ENCODE measurements at regions of chr1 and their contacts with region 1.

Region 1: DNA sequence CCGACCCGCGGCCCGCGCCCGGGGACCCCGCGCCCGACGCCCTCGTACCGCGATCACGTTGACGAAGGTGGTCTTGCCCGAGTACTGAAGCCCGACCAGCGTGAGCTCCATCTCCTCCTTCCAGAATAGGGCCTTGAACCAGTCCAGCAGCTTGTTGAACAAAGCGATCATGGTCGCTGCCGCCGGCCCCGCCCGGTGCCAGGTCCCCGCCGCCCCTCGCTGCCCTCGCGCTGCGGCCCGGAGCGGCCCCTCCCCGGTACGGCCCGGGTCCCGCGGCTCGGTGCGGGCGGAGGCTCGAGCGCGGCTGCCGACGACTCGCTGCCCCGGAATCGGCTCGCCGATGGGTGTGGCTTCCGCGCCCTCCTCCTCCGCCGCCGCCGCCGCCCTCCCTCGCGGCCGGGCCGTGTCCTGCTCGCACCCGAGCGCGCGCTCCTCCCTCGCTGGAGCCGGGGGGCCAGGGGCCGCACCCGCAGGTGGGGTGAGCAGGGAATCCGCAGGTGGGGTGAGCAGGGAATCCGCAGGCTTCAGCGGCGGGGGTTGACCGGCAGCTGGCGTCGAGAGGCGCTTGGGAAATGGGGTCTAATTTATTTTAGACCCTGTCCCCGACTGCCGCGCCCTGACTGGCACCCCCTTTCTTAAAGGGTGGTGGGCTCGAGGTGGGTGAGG is at the start of gene ARL8A:
- DNase-seq: peak; percentile 71
- H3K4me3 Mint-ChIP-seq: peak within 1 kb of the TSS; percentile 93
- H3K27ac Mint-ChIP-seq: peak within 1 kb of the TSS; percentile 83
- H3K4me1 Mint-ChIP-seq: peaks cover 38% of the 10 kb centered on the region
- H3K27me3 Mint-ChIP-seq: no peaks in the 10 kb centered on the region
- total RNA-seq, gene ARL8A: 51.6 to 53.8 TPM

Region 2: DNA sequence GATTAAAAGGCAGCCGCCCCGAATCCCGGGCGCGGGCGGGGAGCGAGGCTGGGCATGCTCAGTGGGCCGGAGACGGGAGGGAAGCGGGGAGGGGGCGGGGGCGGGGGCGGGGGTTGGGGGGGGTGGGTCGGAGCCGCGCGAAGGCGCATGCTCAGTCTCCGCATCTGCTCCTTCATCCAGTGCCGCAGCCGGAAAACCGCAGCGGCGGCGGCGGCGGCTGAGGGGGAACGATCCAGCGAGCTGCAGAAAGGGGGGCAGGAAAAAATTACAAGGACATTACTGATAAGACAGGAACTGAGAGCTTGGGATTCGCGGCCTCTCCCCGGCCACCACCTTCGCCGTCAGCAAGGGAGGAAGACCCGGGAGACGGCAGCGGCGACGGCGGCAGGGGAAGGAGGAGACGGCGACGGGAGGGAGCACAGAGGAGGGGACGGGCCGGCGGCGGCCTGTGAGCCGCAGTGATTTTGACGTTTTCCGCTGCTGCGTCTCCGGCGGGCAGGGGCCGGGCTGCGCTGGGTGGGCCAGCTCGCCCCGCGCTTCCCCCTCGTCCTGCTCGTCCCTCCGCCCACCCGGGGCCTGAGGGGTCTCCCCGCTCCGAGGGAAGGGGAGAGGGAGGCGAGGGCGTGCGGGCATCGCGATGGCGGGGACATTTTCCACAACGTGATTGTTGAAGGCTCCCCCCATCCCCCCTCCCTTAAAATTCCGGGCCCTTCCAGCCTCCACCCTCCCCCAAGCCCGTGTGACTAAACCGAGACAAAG is 1405.6 kb before region 1 on chr1 and contains the start of gene CAMSAP2:
- CTCF ChIA-PET with region 1: no interaction called
- POLR2A ChIA-PET with region 1: no interaction called
- DNase-seq: peak; percentile 64
- H3K4me3 Mint-ChIP-seq: peak within 1 kb of the TSS; percentile 93
- H3K27ac Mint-ChIP-seq: peak within 1 kb of the TSS; percentile 83
- H3K4me1 Mint-ChIP-seq: peaks cover 22% of the 10 kb centered on the region
- H3K27me3 Mint-ChIP-seq: peaks cover 33% of the 10 kb centered on the region
- total RNA-seq, gene CAMSAP2: 0.81 to 0.82 TPM

Region 3: GRCh38 chr1:202112839-202113672 is 31.5 kb before region 1 on chr1:
- CTCF ChIA-PET with region 1: no interaction called
- POLR2A ChIA-PET with region 1: no interaction called
- DNase-seq: no peak
- H3K4me3 Mint-ChIP-seq: no peak overlapping the region
- H3K27ac Mint-ChIP-seq: no peak overlapping the region
- H3K4me1 Mint-ChIP-seq: no peaks in the 10 kb centered on the region
- H3K27me3 Mint-ChIP-seq: no peaks in the 10 kb centered on the region

Region 4: GRCh38 chr1:202154766-202155477 is 10.4 kb after region 1 on chr1:
- CTCF ChIA-PET with region 1: interaction called, 35 read pairs
- POLR2A ChIA-PET with region 1: interaction called, 7 read pairs
- DNase-seq: peak; percentile 64
- H3K4me3 Mint-ChIP-seq: no peak overlapping the region
- H3K27ac Mint-ChIP-seq: peak overlapping the region; percentile 43
- H3K4me1 Mint-ChIP-seq: peaks cover 53% of the 10 kb centered on the region
- H3K27me3 Mint-ChIP-seq: no peaks in the 10 kb centered on the region

Region 5: DNA sequence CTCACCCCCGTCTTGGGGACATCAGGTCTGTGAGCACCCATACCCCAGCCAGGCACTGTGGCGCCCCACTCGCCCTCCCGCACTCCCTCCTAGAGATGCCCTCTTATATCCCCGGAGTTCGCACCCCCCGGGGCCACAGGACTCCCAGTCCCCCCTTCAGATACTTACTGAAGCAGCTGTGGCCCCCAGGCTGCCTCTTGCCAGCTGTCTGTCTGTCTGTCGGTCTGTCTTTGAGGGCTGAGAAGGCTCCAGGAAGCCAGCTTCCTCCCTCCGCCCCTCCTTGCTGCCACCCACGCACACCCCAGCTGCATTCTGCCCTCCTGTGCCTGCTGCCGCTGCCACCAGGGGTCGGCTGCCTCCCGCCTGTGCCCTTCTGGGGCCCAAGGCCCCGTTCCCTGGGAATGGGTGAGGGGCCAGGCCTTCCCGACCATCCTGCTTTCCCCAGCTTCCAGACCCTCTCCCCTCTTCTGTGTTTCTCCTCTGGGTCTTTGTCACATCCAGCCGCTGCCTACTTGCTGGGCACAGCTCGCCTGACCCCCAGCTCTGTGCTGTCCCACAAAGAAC is 15.9 kb after region 1 on chr1 and contains the start of gene PTPN7:
- CTCF ChIA-PET with region 1: interaction called, 35 read pairs
- POLR2A ChIA-PET with region 1: interaction called, 7 read pairs
- DNase-seq: peak; percentile 80
- H3K4me3 Mint-ChIP-seq: peak within 1 kb of the TSS; percentile 95
- H3K27ac Mint-ChIP-seq: peak within 1 kb of the TSS; percentile 97
- H3K4me1 Mint-ChIP-seq: peaks cover 90% of the 10 kb centered on the region
- H3K27me3 Mint-ChIP-seq: no peaks in the 10 kb centered on the region
- total RNA-seq, gene PTPN7: 183 to 188 TPM